Gastrocnemius medialis (tissue), 4 donors: ENCODE measurements at regions of chr11 and their contacts with region 1.

Region 1: GRCh38 chr11:125164422-125165110 is at the start of gene PKNOX2:
- DNase-seq: peak; percentile 61 to 83
- ATAC-seq: peak; percentile 65 to 70
- H3K4me3 ChIP-seq: peak within 1 kb of the TSS; percentile 62 to 90 (median 70)
- H3K27ac ChIP-seq: peak within 1 kb of the TSS; percentile 88 to 99 (median 91)
- H3K4me1 ChIP-seq: peaks cover 31 to 32% of the 10 kb centered on the region in 2 donors
- H3K27me3 ChIP-seq: no peaks in the 10 kb centered on the region
- CTCF ChIP-seq: peak; percentile 51 to 91 (median 54)
- POLR2A ChIP-seq: peak; percentile 93 to 96
- total RNA-seq, gene PKNOX2: 3.7 to 11.7 (median 6.0) TPM

Region 2: DNA sequence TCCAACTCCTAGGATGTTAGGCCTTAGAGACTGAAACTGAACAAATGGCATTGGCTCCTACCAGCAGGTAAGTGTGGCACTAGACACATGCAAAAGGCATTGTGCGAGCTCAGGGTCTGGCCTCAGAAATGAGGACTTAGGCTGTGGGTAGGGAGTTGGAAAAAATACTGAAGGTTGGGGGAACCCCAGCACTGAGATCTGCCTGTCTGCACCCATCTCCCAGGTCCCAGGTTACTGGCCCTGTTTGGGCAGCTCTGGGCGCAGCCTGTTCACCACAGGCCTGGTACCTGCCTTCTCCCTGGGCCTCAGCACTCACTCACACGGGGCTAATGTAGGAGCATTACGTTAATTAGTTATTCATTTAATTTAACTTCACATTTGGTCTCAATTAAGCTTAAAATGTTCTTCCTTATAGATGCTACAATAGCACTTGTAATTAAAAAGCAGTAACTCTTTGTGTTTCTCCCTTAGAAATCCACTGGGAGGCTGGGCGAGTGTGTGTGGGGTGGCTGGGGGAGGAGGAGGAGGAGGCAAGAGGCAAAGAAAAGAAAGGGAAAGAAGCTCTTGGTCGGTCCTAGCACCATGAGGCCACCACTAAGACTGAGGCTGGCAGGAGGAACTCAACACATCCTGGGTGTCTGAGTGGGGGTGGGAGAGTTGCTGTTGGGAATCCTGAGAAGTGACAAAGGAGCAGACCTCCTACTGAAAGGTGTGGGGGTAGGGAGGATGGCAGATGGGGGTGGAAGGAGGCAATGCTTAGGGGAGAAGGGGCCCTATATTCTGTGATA is 72.5 kb before region 1 on chr11:
- in situ Hi-C with region 1: no loop called
- intact Hi-C with region 1: no loop called
- DNase-seq: no peak
- ATAC-seq: no peak
- H3K4me3 ChIP-seq: no peak overlapping the region
- H3K27ac ChIP-seq: no peak overlapping the region
- H3K4me1 ChIP-seq: peaks cover 0 to 6% of the 10 kb centered on the region in 2 donors
- H3K27me3 ChIP-seq: no peaks in the 10 kb centered on the region
- CTCF ChIP-seq: no peak
- POLR2A ChIP-seq: no peak

Region 3: DNA sequence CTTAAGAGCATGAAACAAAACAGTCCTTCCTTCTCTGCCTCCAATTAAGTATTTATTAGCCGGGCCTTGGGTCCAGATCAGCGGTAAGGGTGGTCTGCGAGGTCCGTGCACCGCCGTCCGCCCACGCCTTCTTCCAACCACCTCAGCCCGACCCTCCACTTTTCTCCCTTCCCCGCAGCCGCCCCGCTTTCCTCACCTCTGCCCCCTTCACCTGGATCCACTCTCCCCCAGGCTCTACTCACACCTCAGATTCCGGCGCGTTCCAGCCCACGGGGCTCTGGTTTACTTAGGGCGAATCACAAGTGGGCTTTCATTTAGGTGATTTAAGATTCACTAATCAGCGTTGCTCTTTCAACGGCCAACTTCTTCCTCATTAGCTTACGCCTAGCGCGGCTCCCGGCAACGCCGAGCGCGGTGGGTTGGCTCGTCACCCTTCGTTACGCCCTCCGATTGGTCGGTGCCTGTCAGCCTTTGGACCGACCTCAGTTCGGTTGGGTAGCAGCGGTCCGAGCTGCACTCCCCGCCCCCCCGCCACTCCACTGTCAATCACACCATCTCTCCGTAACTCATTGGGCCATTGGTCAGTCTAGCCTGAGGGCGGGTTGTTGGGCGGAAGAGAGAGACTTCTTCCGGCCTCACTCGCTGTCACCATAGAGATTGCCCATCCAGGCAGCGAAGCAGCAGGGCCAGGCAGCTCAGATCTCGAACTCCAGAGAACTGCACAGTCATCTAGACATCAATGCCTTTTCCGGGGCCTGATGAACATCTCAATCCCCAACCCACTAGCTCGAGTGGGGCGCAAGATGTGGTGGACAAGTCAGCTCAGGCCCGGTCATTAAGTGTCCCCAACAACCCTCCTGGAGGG is 53.0 kb before region 1 on chr11 and contains the start of gene TMEM218:
- in situ Hi-C with region 1: no loop called
- intact Hi-C with region 1: loop called (anchors 2 kb)
- DNase-seq: peak; percentile 99
- ATAC-seq: peak; percentile 98 to 99
- H3K4me3 ChIP-seq: peak within 1 kb of the TSS; percentile 86 to 97 (median 92)
- H3K27ac ChIP-seq: peak within 1 kb of the TSS; percentile 82 to 86 (median 84)
- H3K4me1 ChIP-seq: peaks cover 11 to 15% of the 10 kb centered on the region in 2 donors
- H3K27me3 ChIP-seq: peaks cover 0 to 3% (median 0%) of the 10 kb centered on the region in 3 donors
- CTCF ChIP-seq: no peak
- POLR2A ChIP-seq: no peak
- total RNA-seq, gene TMEM218: 6.3 to 11.2 (median 9.4) TPM

Region 4: DNA sequence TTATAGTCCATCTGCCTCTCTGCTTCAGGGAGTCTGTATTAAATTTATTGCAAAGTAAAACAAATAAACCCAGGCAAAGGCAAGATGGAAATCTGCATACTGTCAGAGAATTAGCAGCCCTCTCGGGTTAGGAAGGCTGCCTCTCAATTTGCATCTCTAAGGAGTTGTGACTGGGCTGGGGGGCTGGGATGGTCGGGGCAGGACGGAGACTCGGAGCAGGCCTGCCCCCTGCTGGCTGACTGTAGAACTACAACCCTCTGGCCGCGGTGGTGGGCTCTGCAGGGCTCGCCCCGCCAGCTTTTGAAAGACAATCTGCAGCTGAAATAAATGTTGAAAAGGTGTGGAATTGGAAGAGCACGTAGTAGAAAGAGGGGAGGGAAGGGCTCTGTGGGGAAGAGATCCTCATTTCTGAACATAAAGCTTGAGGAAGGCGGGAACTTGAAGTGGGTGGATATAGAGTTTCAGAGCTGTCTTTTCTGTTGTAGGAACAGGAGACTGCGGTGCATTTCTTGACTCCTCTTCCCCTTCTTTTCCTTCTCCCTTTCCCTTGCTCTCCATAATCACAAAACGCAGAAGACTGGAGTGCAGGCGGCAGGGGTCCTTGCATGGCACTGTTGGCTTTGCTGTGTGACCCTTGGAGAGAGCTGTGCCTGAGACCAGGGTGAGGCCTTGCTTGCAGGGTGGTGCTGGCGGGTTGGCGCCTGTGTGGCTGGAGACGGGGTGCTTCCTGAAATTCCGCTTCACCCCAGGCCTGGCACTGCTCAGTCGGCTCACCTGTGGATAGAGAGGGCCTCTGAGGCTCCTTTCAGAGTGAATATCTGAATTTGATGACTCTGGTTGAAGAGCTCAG is 22.7 kb before region 1 on chr11:
- in situ Hi-C with region 1: no loop called
- intact Hi-C with region 1: no loop called
- DNase-seq: no peak
- ATAC-seq: peak; percentile 9 to 83
- H3K4me3 ChIP-seq: no peak overlapping the region
- H3K27ac ChIP-seq: no peak overlapping the region
- H3K4me1 ChIP-seq: peaks cover 0 to 4% of the 10 kb centered on the region in 2 donors
- H3K27me3 ChIP-seq: peaks cover 0 to 8% (median 6%) of the 10 kb centered on the region in 3 donors
- CTCF ChIP-seq: peak; percentile 84 to 95 (median 88)
- POLR2A ChIP-seq: no peak

Region 5: GRCh38 chr11:125224391-125225010 is 59.9 kb after region 1 on chr11:
- in situ Hi-C with region 1: no loop called
- intact Hi-C with region 1: loop called (anchors 2 kb)
- DNase-seq: no peak
- ATAC-seq: no peak
- H3K4me3 ChIP-seq: no peak overlapping the region
- H3K27ac ChIP-seq: peak overlapping the region; percentile 56 to 75 (median 70)
- H3K4me1 ChIP-seq: peaks cover 40 to 46% of the 10 kb centered on the region in 2 donors
- H3K27me3 ChIP-seq: no peaks in the 10 kb centered on the region
- CTCF ChIP-seq: peak in 2 of 5 experiments; percentile 11 to 16
- POLR2A ChIP-seq: no peak

Region 6: GRCh38 chr11:125281831-125282595 is 117.4 kb after region 1 on chr11:
- in situ Hi-C with region 1: no loop called
- intact Hi-C with region 1: loop called (anchors 5 kb)
- DNase-seq: no peak
- ATAC-seq: peak; percentile 15 to 36
- H3K4me3 ChIP-seq: no peak overlapping the region
- H3K27ac ChIP-seq: peak overlapping the region in 3 of 4 donors; percentile 29 to 61 (median 49)
- H3K4me1 ChIP-seq: peaks cover 32 to 33% of the 10 kb centered on the region in 2 donors
- H3K27me3 ChIP-seq: no peaks in the 10 kb centered on the region
- CTCF ChIP-seq: no peak
- POLR2A ChIP-seq: no peak

Region 7: GRCh38 chr11:125429166-125429707 is 264.7 kb after region 1 on chr11:
- in situ Hi-C with region 1: no loop called
- intact Hi-C with region 1: loop called (anchors 1 kb)
- DNase-seq: peak; percentile 42 to 72
- ATAC-seq: peak in 1 of 2 donors; percentile 16
- H3K4me3 ChIP-seq: no peak overlapping the region
- H3K27ac ChIP-seq: peak overlapping the region; percentile 24 to 49 (median 39)
- H3K4me1 ChIP-seq: peaks cover 63 to 69% of the 10 kb centered on the region in 2 donors
- H3K27me3 ChIP-seq: no peaks in the 10 kb centered on the region
- CTCF ChIP-seq: peak; percentile 67 to 81 (median 74)
- POLR2A ChIP-seq: no peak